ENCODE measurements at regions of chr1 and their contacts with region 1.

Region 1: GRCh38 chr1:181479137-181479745 is 4.1 kb upstream of the CACNA1E start:
- DNase-seq: peak; percentile 32
- ATAC-seq: peak; percentile 89
- H3K4me3 ChIP-seq: no peak overlapping the region
- H3K27ac ChIP-seq: no peak overlapping the region
- H3K4me1 ChIP-seq: peaks cover 4% of the 10 kb centered on the region
- H3K27me3 ChIP-seq: peaks cover 24% of the 10 kb centered on the region
- CTCF ChIP-seq: peak; percentile 84

Region 2: DNA sequence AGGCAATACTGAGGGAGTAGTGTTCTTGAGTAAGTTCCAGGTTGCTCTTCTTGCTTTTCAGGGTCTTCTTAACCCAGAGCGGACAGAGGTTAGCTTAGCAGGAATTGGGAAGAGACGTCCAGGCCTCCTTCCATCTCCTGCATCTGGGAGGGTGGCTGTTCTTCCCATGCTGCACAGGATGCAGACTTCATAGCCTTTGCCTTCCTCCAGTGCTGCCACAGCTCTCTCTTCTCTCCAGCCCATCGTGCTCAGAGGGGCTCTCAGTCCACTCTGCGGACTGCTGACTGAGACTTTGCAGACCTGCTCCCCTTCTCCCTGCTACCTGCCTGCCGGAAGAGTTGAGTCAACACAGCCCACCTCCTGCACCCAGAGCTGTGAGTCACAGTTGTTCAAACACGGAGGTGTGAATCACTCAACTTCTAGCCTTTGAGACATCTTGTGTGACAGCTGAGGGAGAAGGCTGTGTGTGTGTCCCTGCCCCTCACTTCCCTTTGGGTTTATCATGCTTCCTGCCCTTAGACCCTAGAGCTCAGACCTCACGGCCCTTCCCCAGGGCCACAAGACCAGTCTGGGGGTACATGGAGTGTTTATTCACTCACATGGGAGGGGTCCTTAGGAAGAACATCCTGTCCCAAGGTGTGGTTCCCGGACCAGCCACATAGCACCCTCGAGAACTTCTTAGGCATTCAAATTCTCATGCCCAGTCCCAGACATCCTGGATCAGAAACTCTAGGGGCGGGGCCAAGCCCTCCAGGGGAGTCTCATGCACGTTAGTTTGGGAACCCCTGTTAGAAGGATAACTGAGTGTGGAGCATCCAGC is 154.2 kb before region 1 on chr1:
- CTCF ChIA-PET with region 1: no interaction called
- POLR2A ChIA-PET with region 1: no interaction called
- in situ Hi-C with region 1: no loop called
- intact Hi-C with region 1: no loop called
- DNase-seq: no peak
- ATAC-seq: peak; percentile 76
- H3K4me3 ChIP-seq: no peak overlapping the region
- H3K27ac ChIP-seq: no peak overlapping the region
- H3K4me1 ChIP-seq: no peaks in the 10 kb centered on the region
- H3K27me3 ChIP-seq: peaks cover 2% of the 10 kb centered on the region; the same call in 1 of the 2 replicates
- CTCF ChIP-seq: no peak

Region 3: DNA sequence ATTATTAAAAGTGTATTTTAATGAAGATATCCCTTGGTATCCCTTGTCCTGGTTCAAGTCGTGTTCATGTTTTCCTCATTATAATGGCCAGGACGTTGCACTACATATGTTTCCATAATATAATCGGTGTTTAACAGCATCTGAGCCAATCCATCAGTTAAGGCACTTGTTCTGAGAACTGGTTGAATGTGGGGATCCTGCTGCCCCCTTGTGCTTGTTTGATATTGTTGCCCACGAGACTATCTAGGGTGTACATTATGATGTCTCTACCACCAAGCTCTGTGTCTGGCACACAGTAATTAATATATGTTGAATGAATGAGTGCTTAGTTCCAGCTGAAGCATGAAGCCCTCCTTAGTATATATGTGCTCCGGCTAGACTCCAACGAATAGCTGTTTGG is 197.0 kb after region 1 on chr1:
- CTCF ChIA-PET with region 1: no interaction called
- POLR2A ChIA-PET with region 1: no interaction called
- in situ Hi-C with region 1: no loop called
- intact Hi-C with region 1: loop called (anchors 1 kb)
- DNase-seq: peak; percentile 10
- ATAC-seq: peak; percentile 68; the same call in 1 of the 2 replicates
- H3K4me3 ChIP-seq: no peak overlapping the region
- H3K27ac ChIP-seq: no peak overlapping the region
- H3K4me1 ChIP-seq: no peaks in the 10 kb centered on the region
- H3K27me3 ChIP-seq: peaks cover 5% of the 10 kb centered on the region; the same call in 1 of the 2 replicates
- CTCF ChIP-seq: peak; percentile 56

Region 4: DNA sequence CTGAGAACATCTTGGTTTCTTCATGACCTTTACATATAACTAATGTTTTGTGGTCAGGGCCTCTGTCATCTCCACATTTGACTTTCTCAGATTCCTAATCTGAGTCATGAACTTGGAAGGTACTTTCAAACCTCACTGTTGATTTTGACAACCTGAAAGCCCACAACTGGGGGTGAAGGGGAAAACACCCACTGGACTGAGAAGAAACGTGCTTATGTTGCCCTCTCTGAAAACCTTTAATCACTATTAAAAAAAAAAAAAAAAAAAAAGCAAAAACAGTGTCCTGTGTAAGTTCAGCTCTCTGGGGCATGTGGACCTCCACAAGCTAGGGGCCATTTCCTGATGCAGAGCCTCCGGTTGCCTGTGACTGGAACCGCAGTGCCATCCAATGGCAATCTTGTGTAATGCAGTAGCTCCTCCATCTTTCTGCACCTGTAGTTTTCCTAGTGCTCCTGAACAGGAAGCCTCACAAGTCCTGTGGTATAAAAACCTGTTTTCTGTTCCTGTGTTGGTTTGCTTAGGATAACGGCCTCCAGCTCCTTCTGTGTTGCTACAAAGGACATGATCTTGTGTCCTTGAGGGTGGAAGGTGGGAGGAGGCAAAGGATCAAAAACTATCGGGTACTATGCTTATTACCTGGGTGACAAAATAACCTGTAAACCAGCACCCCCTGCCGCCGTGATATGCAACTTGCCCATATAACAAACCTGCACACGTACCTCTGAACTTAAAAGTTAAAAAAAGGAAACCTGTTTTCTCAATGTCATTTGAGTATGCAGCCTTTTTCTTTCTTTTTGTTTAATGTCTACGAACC is 457.7 kb after region 1 on chr1:
- CTCF ChIA-PET with region 1: interaction called, 19 read pairs
- POLR2A ChIA-PET with region 1: interaction called, 3 read pairs
- in situ Hi-C with region 1: no loop called
- intact Hi-C with region 1: loop called (anchors 2 kb)
- DNase-seq: peak; percentile 48
- ATAC-seq: peak; percentile 65
- H3K4me3 ChIP-seq: no peak overlapping the region
- H3K27ac ChIP-seq: no peak overlapping the region
- H3K4me1 ChIP-seq: no peaks in the 10 kb centered on the region
- H3K27me3 ChIP-seq: no peaks in the 10 kb centered on the region; the same call in 1 of the 2 replicates
- CTCF ChIP-seq: peak; percentile 76

Region 5: GRCh38 chr1:182087861-182088341 is 608.7 kb after region 1 on chr1:
- CTCF ChIA-PET with region 1: no interaction called
- POLR2A ChIA-PET with region 1: no interaction called
- in situ Hi-C with region 1: no loop called
- intact Hi-C with region 1: no loop called
- DNase-seq: no peak
- ATAC-seq: no peak
- H3K4me3 ChIP-seq: no peak overlapping the region
- H3K27ac ChIP-seq: no peak overlapping the region
- H3K4me1 ChIP-seq: no peaks in the 10 kb centered on the region
- H3K27me3 ChIP-seq: no peaks in the 10 kb centered on the region
- CTCF ChIP-seq: no peak

Measured in Panc1 (cell line).